HEK293T (cell line): ENCODE measurements at regions of chr17 and their contacts with region 1.

Region 1: DNA sequence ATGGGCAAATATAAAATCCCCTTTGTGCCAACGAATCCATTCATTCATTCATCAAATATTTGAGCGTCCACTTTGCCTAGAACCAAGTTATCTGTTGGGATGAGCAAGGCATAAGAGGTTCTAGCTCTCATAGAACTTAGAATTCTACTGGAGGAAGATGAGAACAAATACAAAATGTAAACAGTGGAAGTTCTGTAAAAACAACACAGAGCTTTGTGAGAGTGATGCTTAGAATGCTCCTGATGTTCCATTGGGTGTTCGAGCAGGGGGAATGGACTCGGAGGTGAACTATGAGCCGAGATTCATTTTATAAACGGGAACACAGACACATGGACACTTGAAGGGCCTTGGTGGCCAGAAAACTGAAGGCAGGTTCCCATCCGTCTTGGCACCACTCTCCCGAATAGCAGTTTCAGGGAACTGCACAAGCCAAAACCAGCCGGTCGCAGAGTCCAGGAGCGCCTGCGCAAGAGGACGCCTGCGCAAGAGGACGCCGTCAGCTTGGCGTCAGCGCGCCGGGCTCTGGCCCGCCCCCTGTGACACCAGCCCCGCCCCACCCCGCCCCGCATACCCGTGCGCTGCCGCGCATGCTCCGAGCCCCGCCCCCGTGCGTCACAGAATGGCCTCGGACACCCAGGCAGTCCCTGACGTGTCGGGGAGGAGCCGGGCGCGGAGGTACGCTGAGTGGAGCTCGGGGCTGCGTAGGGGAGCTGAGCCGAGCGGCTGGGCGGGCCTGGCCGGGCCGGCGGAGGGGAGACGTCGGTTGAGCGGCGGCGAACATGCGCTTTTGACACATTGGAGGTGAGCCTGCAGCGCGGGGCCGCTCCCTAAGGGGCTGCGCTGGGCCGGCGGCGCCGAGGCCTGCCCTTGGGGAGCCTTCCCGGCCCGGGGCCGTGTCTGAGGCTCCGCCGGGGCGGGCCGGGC is at the start of gene NDEL1:
- DNase-seq: peak; percentile 99

Region 2: GRCh38 chr17:8359769-8360168 is 75.7 kb before region 1 on chr17:
- CTCF ChIA-PET with region 1: no interaction called
- POLR2A ChIA-PET with region 1: no interaction called
- DNase-seq: no peak

Region 3: GRCh38 chr17:8420041-8420934 is 15.2 kb before region 1 on chr17:
- CTCF ChIA-PET with region 1: no interaction called
- POLR2A ChIA-PET with region 1: interaction called, 17 read pairs
- DNase-seq: no peak